CD4-positive, alpha-beta memory T cell (primary cell): ENCODE measurements at regions of chr17 and their contacts with region 1.

Region 1: DNA sequence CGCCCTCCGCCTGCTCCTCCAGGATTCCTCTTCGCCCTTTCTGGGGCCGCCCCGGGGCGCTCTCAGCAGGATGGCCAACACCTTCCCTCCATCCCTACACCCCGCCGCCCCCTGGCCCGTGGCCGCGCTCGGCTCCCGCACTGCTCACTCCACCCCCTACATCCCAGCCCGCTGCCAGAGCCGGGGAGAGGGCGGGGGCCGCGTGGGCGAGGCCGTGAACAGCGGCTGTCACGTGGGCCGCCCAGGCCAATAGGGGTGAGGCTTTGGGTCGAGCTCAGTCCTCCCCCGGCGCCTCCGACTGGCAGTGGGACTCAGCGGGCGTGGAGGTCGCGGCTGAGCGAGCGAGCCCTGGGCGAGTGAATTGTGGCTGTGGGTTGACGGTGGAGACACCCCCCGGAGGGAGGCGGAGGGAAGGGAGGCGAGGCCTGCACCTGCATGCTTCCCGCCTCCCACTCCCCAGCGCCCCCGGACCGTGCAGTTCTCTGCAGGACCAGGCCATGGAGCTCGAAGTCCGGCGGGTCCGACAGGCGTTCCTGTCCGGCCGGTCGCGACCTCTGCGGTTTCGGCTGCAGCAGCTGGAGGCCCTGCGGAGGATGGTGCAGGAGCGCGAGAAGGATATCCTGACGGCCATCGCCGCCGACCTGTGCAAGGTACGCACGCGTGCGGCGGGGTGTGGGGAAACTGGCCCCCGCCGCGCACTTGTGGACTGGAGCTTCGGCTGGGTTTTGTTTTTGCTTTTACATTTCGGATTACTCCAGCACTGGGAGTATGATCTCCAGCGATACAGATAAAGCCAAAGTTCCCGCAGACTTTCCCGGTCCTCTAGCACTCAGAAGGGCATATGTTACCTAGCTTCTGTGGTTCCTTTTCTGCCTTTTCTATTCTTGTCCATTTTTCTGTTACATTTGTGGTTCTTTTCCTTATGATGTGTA is at the start of gene ALDH3A2:
- DNase-seq: peak; percentile 89 to 95 (median 89)
- H3K4me3 ChIP-seq: peak within 1 kb of the TSS; percentile 33 to 86
- H3K4me3 Mint-ChIP-seq: peak within 1 kb of the TSS; percentile 93 to 98 (median 94)
- H3K27ac ChIP-seq: peak within 1 kb of the TSS; percentile 54
- H3K27ac Mint-ChIP-seq: peak within 1 kb of the TSS; percentile 83 to 97 (median 94)
- H3K4me1 ChIP-seq: peaks cover 26% of the 10 kb centered on the region
- H3K4me1 Mint-ChIP-seq: peaks cover 21 to 41% (median 32%) of the 10 kb centered on the region in 4 donors
- H3K27me3 ChIP-seq: no peaks in the 10 kb centered on the region
- H3K27me3 Mint-ChIP-seq: no peaks in the 10 kb centered on the region
- total RNA-seq, gene ALDH3A2: 45.8 to 52.5 TPM

Region 2: DNA sequence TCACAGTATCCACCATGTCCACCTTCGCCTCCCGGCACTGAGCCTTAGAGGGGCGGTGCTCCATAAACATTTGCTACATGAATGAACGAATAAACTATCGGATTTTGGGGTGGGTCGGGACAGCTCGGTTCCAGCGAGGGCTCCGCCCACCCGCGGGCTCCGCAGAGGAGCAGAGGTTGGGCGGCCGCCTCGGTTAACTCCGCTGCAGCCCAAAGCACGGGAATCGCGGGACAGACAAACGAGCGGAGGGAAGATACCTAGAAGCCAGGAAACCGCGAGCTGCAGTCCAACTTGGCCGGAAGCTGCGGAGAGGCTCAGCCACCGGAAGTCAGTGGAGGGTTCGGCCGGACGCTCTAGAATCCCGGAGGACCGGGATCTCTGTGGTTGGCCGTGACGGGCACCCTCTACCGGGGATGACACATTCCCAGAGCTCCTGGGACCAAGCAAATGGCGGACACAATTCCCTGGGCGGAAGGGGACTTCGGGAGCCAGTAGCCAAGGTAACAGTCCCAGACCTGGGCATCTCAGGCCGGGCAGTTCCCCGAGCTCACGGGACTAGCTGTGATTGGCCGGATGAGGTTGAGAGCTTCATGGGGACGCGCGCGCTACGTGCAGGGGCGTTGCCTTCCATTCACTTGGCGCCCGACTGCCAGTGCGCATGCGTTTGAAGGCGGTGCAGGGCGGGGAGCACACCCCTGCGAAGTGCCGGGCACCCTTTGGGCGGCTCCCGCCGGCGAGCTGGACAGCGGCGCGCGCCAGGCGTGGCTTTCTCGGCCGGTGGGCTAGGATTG is 270.9 kb before region 1 on chr17:
- CTCF ChIA-PET with region 1: interaction called, 4 read pairs
- POLR2A ChIA-PET with region 1: interaction called, 13 read pairs
- intact Hi-C with region 1: loop called (anchors 5 kb)
- DNase-seq: peak; percentile 94 to 96 (median 95)
- H3K4me3 ChIP-seq: peak overlapping the region; percentile 96 to 98
- H3K4me3 Mint-ChIP-seq: peak overlapping the region; percentile 94 to 100 (median 99)
- H3K27ac ChIP-seq: peak overlapping the region; percentile 91
- H3K27ac Mint-ChIP-seq: peak overlapping the region; percentile 91 to 99 (median 98)
- H3K4me1 ChIP-seq: peaks cover 19% of the 10 kb centered on the region
- H3K4me1 Mint-ChIP-seq: peaks cover 12 to 49% (median 18%) of the 10 kb centered on the region in 4 donors
- H3K27me3 ChIP-seq: no peaks in the 10 kb centered on the region
- H3K27me3 Mint-ChIP-seq: no peaks in the 10 kb centered on the region

Region 3: DNA sequence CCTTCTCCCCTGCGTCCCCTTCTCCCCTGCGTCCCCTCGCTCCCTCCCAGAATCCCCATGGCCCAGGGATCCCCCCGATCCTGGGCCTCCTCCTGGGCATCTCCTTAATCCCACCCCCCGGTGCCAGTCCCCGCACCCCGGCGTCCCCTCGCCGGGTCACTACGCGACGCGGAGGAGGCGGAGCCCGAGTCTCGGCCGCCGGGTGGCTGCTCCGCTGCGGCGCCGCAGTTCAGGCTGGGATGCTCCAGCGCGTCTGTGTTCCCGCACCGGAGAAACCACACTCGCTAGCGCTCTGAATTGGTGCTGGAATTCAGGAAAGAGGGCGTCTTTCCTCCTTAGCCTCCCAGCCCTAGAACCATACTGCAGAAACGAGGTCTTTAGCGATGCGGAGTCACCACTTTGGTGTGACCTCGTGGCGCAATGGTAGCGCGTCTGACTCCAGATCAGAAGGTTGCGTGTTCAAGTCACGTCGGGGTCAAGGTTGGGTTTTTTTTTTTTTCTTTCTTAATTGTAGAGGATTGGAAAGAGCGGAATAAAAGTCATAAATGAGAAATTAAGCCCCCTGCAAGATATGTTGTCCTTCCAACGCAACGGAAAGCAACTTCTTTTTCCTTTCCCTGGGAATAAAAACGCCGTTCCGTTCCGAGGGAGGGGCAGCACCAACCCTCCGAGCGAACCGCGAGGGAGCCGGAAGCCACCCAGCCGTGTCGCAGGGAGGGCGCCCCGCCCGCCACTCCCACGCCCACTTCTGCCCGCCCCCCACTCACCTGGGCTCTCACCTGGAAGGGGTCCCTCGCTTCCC is 140.8 kb before region 1 on chr17:
- CTCF ChIA-PET with region 1: interaction called, 19 read pairs
- POLR2A ChIA-PET with region 1: interaction called, 4 read pairs
- intact Hi-C with region 1: loop called (anchors 1 kb)
- DNase-seq: peak; percentile 86 to 90 (median 88)
- H3K4me3 ChIP-seq: peak overlapping the region; percentile 91 to 95
- H3K4me3 Mint-ChIP-seq: peak overlapping the region; percentile 87 to 98 (median 93)
- H3K27ac ChIP-seq: peak overlapping the region; percentile 61
- H3K27ac Mint-ChIP-seq: peak overlapping the region; percentile 86 to 99 (median 98)
- H3K4me1 ChIP-seq: peaks cover 5% of the 10 kb centered on the region
- H3K4me1 Mint-ChIP-seq: peaks cover 5 to 12% (median 9%) of the 10 kb centered on the region in 4 donors
- H3K27me3 ChIP-seq: no peaks in the 10 kb centered on the region
- H3K27me3 Mint-ChIP-seq: peaks cover 1 to 5% of the 10 kb centered on the region in 2 donors

Region 4: GRCh38 chr17:19513897-19514488 is 134.7 kb before region 1 on chr17:
- CTCF ChIA-PET with region 1: interaction called, 19 read pairs
- POLR2A ChIA-PET with region 1: interaction called, 4 read pairs
- intact Hi-C with region 1: loop called (anchors 1 kb)
- DNase-seq: peak; percentile 59 to 68 (median 64)
- H3K4me3 ChIP-seq: no peak overlapping the region
- H3K4me3 Mint-ChIP-seq: no peak overlapping the region
- H3K27ac ChIP-seq: no peak overlapping the region
- H3K27ac Mint-ChIP-seq: peak overlapping the region in 4 of 7 donors; percentile 7 to 68 (median 31)
- H3K4me1 ChIP-seq: no peaks in the 10 kb centered on the region
- H3K4me1 Mint-ChIP-seq: peaks cover 1 to 8% (median 3%) of the 10 kb centered on the region in 4 donors
- H3K27me3 ChIP-seq: no peaks in the 10 kb centered on the region
- H3K27me3 Mint-ChIP-seq: no peaks in the 10 kb centered on the region

Region 5: DNA sequence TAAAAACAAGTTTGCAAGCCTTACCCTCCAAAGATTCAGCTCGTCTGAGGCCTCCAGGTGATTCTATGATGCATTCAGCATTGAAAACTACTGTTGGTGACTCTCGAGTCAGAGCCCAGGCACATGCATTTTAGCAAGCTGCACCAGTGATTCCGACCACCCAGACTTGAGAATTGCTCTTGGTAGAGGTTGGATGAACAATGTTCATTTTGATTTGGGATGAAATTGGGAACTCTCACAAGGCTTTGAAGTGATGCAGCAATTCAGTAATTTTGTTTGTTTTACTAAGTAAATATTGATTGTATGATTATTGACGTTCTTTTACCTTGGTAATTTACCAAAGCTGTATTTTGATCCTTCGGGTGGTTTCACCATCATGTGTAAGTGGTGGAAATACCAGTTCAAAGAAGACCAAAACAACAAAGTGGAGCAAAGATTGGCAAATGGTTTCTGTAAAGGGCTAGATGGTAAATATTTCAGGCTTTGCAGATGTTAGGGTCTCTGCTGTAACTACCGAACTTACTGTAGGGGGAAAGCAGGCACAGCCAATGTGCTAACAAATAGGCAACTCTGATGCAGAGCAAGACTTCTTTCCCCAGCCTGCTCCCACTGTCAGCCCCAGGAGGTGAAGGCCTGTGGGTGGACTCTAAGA is 11.6 kb after region 1 on chr17:
- CTCF ChIA-PET with region 1: interaction called, 22 read pairs
- POLR2A ChIA-PET with region 1: interaction called, 13 read pairs
- intact Hi-C with region 1: no loop called
- DNase-seq: no peak
- H3K4me3 ChIP-seq: no peak overlapping the region
- H3K4me3 Mint-ChIP-seq: no peak overlapping the region
- H3K27ac ChIP-seq: no peak overlapping the region
- H3K27ac Mint-ChIP-seq: no peak overlapping the region
- H3K4me1 ChIP-seq: no peaks in the 10 kb centered on the region
- H3K4me1 Mint-ChIP-seq: peaks cover 0 to 6% (median 0%) of the 10 kb centered on the region in 4 donors
- H3K27me3 ChIP-seq: no peaks in the 10 kb centered on the region
- H3K27me3 Mint-ChIP-seq: no peaks in the 10 kb centered on the region

Region 6: DNA sequence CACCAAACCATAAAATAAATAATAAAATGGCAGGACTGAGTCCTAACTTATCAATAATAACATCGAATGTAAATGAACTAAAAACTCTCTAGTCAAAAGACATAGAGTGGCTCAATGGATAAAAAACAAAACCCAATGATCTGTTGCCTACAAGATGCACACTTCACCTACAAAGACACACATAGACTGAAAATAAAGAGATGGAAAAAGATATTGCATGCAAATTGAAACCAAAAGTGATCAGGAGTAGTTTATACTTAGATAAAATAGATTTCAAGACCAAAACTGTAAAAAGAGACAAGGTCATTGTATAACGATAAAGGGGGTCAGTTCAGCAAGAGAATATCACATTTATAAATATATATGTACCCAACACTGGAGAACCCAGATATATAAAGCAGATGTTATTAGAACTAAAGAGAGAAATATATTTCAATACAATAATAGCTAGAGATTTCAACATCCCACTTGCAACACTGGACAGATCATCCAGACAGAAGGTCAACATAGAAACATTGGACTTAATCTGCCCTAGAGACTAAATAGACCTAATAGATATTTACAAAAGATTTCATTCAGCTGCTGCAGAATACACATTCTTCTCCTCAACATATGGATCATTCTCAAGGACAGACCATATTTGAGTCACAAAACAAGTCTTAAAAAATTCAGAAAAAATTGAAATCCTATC is 37.8 kb after region 1 on chr17:
- CTCF ChIA-PET with region 1: no interaction called
- POLR2A ChIA-PET with region 1: no interaction called
- intact Hi-C with region 1: no loop called
- DNase-seq: no peak
- H3K4me3 ChIP-seq: no peak overlapping the region
- H3K4me3 Mint-ChIP-seq: no peak overlapping the region
- H3K27ac ChIP-seq: no peak overlapping the region
- H3K27ac Mint-ChIP-seq: no peak overlapping the region
- H3K4me1 ChIP-seq: no peaks in the 10 kb centered on the region
- H3K4me1 Mint-ChIP-seq: no peaks in the 10 kb centered on the region
- H3K27me3 ChIP-seq: no peaks in the 10 kb centered on the region
- H3K27me3 Mint-ChIP-seq: no peaks in the 10 kb centered on the region

Region 7: DNA sequence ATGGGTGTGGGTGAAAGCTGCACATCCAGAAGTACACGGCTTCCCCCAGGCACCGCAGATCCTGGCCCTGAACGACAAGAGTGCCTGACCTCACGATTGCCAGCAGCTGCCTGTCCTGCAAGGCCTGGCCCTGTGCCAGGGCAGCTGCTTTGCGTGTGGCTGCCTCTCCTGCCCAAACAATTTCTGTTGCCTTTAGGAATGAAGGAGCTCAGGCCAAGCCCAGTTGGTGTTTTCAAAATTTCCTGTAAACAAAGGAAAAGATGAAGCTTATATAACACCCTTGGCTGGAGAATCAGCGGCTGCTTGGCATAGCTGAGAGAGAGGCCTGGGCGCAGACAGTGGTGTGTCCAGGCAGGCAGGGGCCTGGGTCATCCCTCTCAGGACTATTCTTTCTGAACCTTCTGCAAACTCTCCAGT is 79.3 kb after region 1 on chr17:
- CTCF ChIA-PET with region 1: interaction called, 4 read pairs
- POLR2A ChIA-PET with region 1: interaction called, 11 read pairs
- intact Hi-C with region 1: no loop called
- DNase-seq: no peak
- H3K4me3 ChIP-seq: no peak overlapping the region
- H3K4me3 Mint-ChIP-seq: no peak overlapping the region
- H3K27ac ChIP-seq: no peak overlapping the region
- H3K27ac Mint-ChIP-seq: no peak overlapping the region
- H3K4me1 ChIP-seq: peaks cover 21% of the 10 kb centered on the region
- H3K4me1 Mint-ChIP-seq: peaks cover 16 to 36% (median 23%) of the 10 kb centered on the region in 4 donors
- H3K27me3 ChIP-seq: no peaks in the 10 kb centered on the region
- H3K27me3 Mint-ChIP-seq: no peaks in the 10 kb centered on the region

Region 8: GRCh38 chr17:19744922-19745757 is 96.4 kb after region 1 on chr17:
- CTCF ChIA-PET with region 1: interaction called, 18 read pairs
- POLR2A ChIA-PET with region 1: interaction called, 5 read pairs
- intact Hi-C with region 1: no loop called
- DNase-seq: peak; percentile 78 to 82 (median 79)
- H3K4me3 ChIP-seq: no peak overlapping the region
- H3K4me3 Mint-ChIP-seq: peak overlapping the region in 7 of 8 donors; percentile 40 to 71 (median 54)
- H3K27ac ChIP-seq: no peak overlapping the region
- H3K27ac Mint-ChIP-seq: no peak overlapping the region
- H3K4me1 ChIP-seq: peaks cover 8% of the 10 kb centered on the region
- H3K4me1 Mint-ChIP-seq: peaks cover 3 to 9% (median 4%) of the 10 kb centered on the region in 4 donors
- H3K27me3 ChIP-seq: no peaks in the 10 kb centered on the region
- H3K27me3 Mint-ChIP-seq: peaks cover 3 to 7% of the 10 kb centered on the region in 2 donors